HCT116 (cell line): ENCODE measurements at regions of chr9 and their contacts with region 1.

Region 1: GRCh38 chr9:69689991-69690538 is 17.9 kb upstream of the APBA1 start:
- DNase-seq: no peak
- ATAC-seq: no peak
- H3K4me3 ChIP-seq: no peak overlapping the region
- H3K27ac ChIP-seq: no peak overlapping the region
- H3K4me1 ChIP-seq: no peaks in the 10 kb centered on the region
- H3K27me3 ChIP-seq: no peaks in the 10 kb centered on the region
- CTCF ChIP-seq: no peak
- POLR2A ChIP-seq: no peak
- RAD21 ChIP-seq: no peak

Region 2: DNA sequence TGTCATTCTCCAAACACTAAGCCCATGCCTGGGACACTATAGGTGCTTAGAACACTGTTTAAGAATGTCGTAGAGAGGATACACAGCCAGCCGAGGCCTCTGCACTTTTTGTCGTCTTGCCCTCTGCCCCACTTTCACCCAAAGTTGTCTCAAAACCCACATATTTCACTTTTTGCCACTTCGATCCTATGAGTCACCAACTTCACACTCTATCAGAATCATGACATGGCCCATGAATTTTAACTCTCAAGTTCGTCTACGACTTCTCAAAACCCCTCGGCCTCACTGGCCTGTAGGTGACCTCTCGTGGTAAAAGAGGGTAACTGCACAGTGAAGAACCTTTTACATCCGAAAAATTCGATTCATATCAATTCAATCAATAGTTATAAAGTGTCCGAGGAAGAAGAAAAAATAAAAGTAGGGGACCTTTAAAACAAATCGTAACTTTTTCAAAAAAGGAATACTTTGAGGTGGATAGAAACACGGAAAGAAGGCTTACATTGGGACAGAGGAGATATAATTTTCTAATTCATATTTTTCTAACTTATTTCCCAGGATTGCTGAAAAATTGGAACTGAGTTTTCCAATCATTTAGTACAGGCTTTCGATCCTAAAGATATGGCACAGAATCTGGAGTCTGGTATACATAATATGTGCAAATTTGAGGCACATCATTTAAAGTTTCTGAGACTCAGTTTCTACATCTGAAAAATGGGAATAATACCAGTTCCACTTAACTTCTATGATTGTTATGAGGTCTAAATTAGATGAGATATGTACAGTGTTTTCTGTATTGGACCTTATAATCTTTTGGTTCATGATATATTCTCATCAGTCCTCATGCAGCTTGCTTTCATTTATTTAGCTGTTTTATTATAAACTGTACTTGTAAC is 140.5 kb before region 1 on chr9:
- CTCF ChIA-PET with region 1: no interaction called
- POLR2A ChIA-PET with region 1: no interaction called
- RAD21 ChIA-PET with region 1: no interaction called
- intact Hi-C with region 1: no loop called
- DNase-seq: peak; percentile 38
- ATAC-seq: peak; percentile 58
- H3K4me3 ChIP-seq: no peak overlapping the region
- H3K27ac ChIP-seq: no peak overlapping the region
- H3K4me1 ChIP-seq: no peaks in the 10 kb centered on the region
- H3K27me3 ChIP-seq: peaks cover 37% of the 10 kb centered on the region; the same call in 1 of the 2 replicates
- CTCF ChIP-seq: peak; percentile 67 to 89 (median 83); a peak in 5 of 6 replicates
- POLR2A ChIP-seq: no peak
- RAD21 ChIP-seq: peak; percentile 76

Region 3: DNA sequence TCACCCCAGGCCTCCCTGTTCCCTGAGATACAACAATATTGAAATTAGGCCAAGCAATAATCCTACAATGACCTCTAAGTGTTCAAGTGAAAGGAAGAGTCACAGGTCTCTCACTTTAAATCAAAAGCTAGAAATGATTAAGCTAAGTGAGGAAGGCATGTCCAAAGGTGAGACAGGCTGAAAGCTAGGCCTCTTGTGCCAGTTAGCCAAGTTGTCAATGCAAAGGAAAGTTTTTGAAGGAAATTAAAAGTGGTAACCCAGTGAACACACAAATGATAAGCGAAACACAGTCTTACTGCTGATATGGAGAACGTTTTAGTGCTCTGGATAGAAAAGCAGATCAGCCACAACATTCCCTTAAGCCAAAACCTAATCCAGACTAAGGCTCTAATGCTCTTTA is 29.9 kb after region 1 on chr9:
- CTCF ChIA-PET with region 1: no interaction called
- POLR2A ChIA-PET with region 1: no interaction called
- RAD21 ChIA-PET with region 1: no interaction called
- intact Hi-C with region 1: loop called (anchors 5 kb)
- DNase-seq: no peak
- ATAC-seq: no peak
- H3K4me3 ChIP-seq: no peak overlapping the region
- H3K27ac ChIP-seq: no peak overlapping the region
- H3K4me1 ChIP-seq: no peaks in the 10 kb centered on the region
- H3K27me3 ChIP-seq: no peaks in the 10 kb centered on the region
- CTCF ChIP-seq: no peak
- POLR2A ChIP-seq: no peak
- RAD21 ChIP-seq: no peak